ENCODE measurements at regions of chr2 and their contacts with region 1.

Region 1: GRCh38 chr2:170815746-170816503 is 762 bp upstream of the GAD1 start:
- DNase-seq: peak; percentile 81 to 89
- H3K4me3 ChIP-seq: peak overlapping the region; percentile 76
- H3K4me3 Mint-ChIP-seq: peak overlapping the region; percentile 95
- H3K27ac Mint-ChIP-seq: no peak overlapping the region
- H3K4me1 ChIP-seq: peaks cover 7% of the 10 kb centered on the region; the same call in 1 of the 2 replicates
- H3K4me1 Mint-ChIP-seq: peaks cover 7% of the 10 kb centered on the region
- H3K27me3 ChIP-seq: no peaks in the 10 kb centered on the region
- H3K27me3 Mint-ChIP-seq: peaks cover 8% of the 10 kb centered on the region
- CTCF ChIP-seq: peak; percentile 90 to 93

Region 2: DNA sequence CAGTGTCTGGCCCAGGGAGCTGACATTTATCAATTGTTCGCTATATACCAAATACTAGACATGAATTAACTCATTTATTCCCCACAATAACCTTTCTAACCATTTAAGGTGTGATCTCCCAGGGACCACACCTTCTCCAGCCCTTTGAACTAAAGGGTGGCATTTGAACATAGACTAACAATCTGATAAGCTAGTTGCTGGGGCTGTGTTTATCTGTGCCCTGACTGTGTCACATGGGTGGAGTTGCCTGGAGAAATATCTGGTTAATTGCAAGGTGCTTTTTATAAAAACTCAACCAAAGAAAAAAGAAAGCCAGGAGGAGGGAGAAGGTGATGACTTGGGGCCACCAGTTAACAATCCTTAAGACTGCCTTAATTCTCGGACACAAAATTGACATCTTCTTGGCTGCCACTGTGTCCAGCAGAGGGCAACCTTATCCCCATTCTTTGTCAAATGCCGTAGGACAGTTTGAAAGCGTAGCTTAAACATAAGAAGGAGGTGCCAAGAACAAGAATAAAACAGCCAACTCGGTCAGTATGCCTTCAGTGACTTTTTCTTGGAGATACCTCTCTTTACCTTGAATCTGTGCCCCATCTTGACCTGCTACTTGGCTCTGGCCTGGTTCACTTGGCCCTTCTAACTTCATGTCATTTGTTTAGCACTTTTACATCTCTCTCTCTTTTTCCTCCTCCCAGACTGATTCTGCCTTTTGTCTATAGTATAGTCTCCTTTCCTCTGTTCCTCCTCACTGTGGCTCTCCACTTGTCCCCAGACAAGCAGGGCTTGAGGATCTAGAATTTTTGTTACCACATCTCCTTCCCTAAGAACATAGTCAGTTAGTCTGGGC is 454.6 kb before region 1 on chr2:
- CTCF ChIA-PET with region 1: interaction called, 13 read pairs
- POLR2A ChIA-PET with region 1: no interaction called
- intact Hi-C with region 1: loop called (anchors 1 kb)
- DNase-seq: peak; percentile 58 to 70
- H3K4me3 ChIP-seq: no peak overlapping the region
- H3K4me3 Mint-ChIP-seq: no peak overlapping the region
- H3K27ac Mint-ChIP-seq: no peak overlapping the region
- H3K4me1 ChIP-seq: no peaks in the 10 kb centered on the region
- H3K4me1 Mint-ChIP-seq: peaks cover 10% of the 10 kb centered on the region
- H3K27me3 ChIP-seq: no peaks in the 10 kb centered on the region
- H3K27me3 Mint-ChIP-seq: no peaks in the 10 kb centered on the region
- CTCF ChIP-seq: peak; percentile 81 to 87

Region 3: DNA sequence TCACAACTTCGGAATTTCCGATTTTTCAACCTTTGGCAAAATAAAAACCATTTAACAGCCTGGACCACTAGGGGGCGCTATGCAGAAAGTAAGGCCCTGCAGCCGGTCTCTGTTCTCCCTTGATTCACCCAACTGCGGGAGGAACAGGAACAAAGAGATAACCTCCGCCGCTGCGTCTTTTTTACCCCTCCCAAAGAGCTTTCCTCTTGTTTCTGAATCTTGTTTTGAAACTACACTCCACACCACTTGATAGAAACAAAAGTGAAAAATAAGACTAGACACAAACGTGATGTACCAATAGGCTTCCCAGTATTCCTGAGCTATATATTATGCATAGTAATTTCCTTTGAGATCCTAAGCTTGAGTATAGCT is 406.8 kb before region 1 on chr2:
- CTCF ChIA-PET with region 1: interaction called, 5 read pairs
- POLR2A ChIA-PET with region 1: no interaction called
- intact Hi-C with region 1: loop called (anchors 1 kb)
- DNase-seq: peak; percentile 74 to 83
- H3K4me3 ChIP-seq: no peak overlapping the region; the same call in 1 of the 2 replicates
- H3K4me3 Mint-ChIP-seq: peak overlapping the region; percentile 69
- H3K27ac Mint-ChIP-seq: peak overlapping the region; percentile 52
- H3K4me1 ChIP-seq: no peaks in the 10 kb centered on the region
- H3K4me1 Mint-ChIP-seq: peaks cover 6% of the 10 kb centered on the region
- H3K27me3 ChIP-seq: no peaks in the 10 kb centered on the region
- H3K27me3 Mint-ChIP-seq: no peaks in the 10 kb centered on the region
- CTCF ChIP-seq: peak; percentile 82 to 93

Region 4: GRCh38 chr2:170587922-170588321 is 228.0 kb before region 1 on chr2:
- CTCF ChIA-PET with region 1: no interaction called
- POLR2A ChIA-PET with region 1: no interaction called
- intact Hi-C with region 1: loop called (anchors 10 kb)
- DNase-seq: no peak
- H3K4me3 ChIP-seq: no peak overlapping the region
- H3K4me3 Mint-ChIP-seq: no peak overlapping the region
- H3K27ac Mint-ChIP-seq: no peak overlapping the region
- H3K4me1 ChIP-seq: no peaks in the 10 kb centered on the region
- H3K4me1 Mint-ChIP-seq: no peaks in the 10 kb centered on the region
- H3K27me3 ChIP-seq: 0 out of 2 replicates have a peak, but pooled peaks cover 1% of the 10 kb centered on the region
- H3K27me3 Mint-ChIP-seq: no peaks in the 10 kb centered on the region
- CTCF ChIP-seq: no peak

Region 5: GRCh38 chr2:170770606-170771420 is 45.1 kb before region 1 on chr2:
- CTCF ChIA-PET with region 1: interaction called, 5 read pairs
- POLR2A ChIA-PET with region 1: no interaction called
- intact Hi-C with region 1: loop called (anchors 1 kb)
- DNase-seq: peak; percentile 93
- H3K4me3 ChIP-seq: peak overlapping the region; percentile 80
- H3K4me3 Mint-ChIP-seq: peak overlapping the region; percentile 93
- H3K27ac Mint-ChIP-seq: peak overlapping the region; percentile 97
- H3K4me1 ChIP-seq: peaks cover 37% of the 10 kb centered on the region
- H3K4me1 Mint-ChIP-seq: peaks cover 19% of the 10 kb centered on the region
- H3K27me3 ChIP-seq: no peaks in the 10 kb centered on the region
- H3K27me3 Mint-ChIP-seq: no peaks in the 10 kb centered on the region
- CTCF ChIP-seq: no peak

Region 6: GRCh38 chr2:170836027-170836426 is 20.1 kb after region 1 on chr2:
- CTCF ChIA-PET with region 1: no interaction called
- POLR2A ChIA-PET with region 1: no interaction called
- intact Hi-C with region 1: no loop called
- DNase-seq: no peak
- H3K4me3 ChIP-seq: no peak overlapping the region
- H3K4me3 Mint-ChIP-seq: no peak overlapping the region
- H3K27ac Mint-ChIP-seq: no peak overlapping the region
- H3K4me1 ChIP-seq: no peaks in the 10 kb centered on the region
- H3K4me1 Mint-ChIP-seq: no peaks in the 10 kb centered on the region
- H3K27me3 ChIP-seq: no peaks in the 10 kb centered on the region
- H3K27me3 Mint-ChIP-seq: no peaks in the 10 kb centered on the region
- CTCF ChIP-seq: no peak

Region 7: DNA sequence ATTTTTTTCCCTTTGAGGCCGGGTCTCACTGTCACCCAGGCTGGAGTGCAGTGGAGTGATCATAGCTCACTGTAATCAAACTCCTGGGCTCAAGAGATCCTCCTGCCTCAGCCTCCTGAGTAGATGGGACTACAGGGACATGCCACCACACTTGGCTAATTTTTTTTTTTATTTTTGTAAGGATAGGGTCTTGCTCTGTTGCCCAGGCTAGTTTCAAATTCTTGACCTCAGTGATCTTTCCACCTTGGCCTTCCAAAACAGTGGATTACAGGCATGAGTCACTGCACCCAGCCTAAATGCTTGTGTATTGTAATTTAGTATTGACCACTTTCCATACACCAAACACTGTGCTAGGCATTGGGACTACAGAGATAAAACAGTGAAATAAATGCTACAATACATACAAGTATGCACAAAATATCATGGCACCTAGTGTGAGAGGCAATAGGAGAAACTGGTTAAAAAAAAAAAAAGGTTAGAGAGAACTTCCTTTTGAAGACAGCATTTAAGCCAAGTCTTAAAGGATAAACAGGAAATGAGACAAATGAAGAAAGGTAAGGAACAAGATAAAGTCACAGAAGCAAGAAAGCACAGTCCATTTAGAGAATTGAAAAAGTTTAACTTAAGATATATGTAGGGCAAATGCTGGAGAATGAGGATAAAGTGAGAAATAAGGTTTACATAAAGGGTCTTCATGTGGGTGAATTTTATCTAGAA is 226.5 kb after region 1 on chr2:
- CTCF ChIA-PET with region 1: no interaction called
- POLR2A ChIA-PET with region 1: no interaction called
- intact Hi-C with region 1: no loop called
- DNase-seq: no peak
- H3K4me3 ChIP-seq: no peak overlapping the region
- H3K4me3 Mint-ChIP-seq: no peak overlapping the region
- H3K27ac Mint-ChIP-seq: no peak overlapping the region
- H3K4me1 ChIP-seq: no peaks in the 10 kb centered on the region
- H3K4me1 Mint-ChIP-seq: no peaks in the 10 kb centered on the region
- H3K27me3 ChIP-seq: no peaks in the 10 kb centered on the region
- H3K27me3 Mint-ChIP-seq: no peaks in the 10 kb centered on the region
- CTCF ChIP-seq: no peak